ENCODE measurements at regions of chr2 and their contacts with region 1.

Region 1: GRCh38 chr2:11457935-11458334 is 8.0 kb downstream of the E2F6 start:
- DNase-seq: no peak
- ATAC-seq: no peak
- H3K4me3 ChIP-seq: no peak overlapping the region
- H3K27ac ChIP-seq: no peak overlapping the region
- H3K4me1 ChIP-seq: peaks cover 0 to under 1% of the 10 kb centered on the region in 2 donors
- H3K27me3 ChIP-seq: no peaks in the 10 kb centered on the region

Region 2: DNA sequence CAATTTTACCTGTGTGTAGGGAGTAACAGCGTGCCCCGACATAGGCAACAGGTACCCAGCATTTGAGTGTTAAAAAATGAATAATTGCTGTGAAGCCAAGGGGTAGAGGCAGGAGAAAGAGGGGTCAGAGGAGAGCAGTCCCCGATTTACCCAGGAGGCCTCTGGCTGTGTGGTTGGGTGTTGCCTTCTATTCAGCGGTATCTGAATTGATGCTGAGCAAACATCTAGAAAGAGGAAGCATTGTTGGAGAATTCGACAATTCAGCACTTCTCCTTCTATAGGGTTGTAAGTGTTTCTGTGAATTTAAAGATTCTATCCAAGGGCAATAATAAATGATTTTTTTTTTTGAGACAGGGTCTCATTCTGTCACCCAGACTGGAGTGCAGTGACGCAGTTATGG is 636.6 kb before region 1 on chr2:
- intact Hi-C with region 1: loop called in 1 of 2 experiments (anchors 10 kb)
- DNase-seq: no peak
- ATAC-seq: no peak
- H3K4me3 ChIP-seq: no peak overlapping the region
- H3K27ac ChIP-seq: no peak overlapping the region
- H3K4me1 ChIP-seq: no peaks in the 10 kb centered on the region
- H3K27me3 ChIP-seq: no peaks in the 10 kb centered on the region

Region 3: DNA sequence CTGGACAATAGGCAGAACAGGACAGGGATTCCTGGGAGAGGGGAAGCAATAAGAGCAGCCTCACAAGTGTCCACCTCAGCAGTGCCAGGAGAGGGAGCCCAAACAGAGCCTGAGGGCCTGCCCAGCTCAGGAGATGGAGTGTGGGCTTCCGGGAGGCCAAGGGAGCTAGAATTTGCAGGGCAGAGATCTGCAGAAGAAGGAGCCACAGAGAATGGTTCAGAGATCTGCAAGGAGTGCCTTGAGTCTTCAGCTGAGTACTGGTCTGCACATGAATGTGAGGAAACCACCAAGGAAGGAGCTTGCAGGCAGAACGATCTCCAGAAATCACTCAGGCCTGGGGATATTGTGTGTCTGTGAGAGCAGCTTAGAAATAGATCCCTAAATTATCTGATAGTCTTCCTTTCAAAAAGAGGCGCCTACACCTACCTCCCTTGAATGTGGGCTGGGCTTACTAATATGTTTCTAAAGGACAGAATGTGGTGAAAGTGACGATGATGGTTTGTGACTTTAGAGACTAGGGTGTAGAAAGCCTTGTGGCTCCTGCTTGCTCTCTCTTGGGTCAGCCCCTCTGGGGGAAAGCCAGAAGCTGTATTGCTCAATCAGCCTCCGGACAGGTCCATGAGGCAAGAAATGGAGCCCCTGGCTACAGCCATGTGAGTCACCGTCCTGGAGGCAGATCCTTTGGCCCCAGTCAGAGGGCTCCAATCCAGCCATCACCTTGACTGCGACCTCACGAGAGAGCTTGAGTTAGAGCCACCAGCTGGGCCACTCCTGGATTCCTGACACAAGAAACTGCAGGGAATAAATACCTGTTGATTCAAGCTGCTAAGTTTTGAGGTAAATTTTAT is 280.9 kb after region 1 on chr2:
- intact Hi-C with region 1: no loop called
- DNase-seq: peak; percentile 88 to 90
- ATAC-seq: peak; percentile 86
- H3K4me3 ChIP-seq: no peak overlapping the region
- H3K27ac ChIP-seq: no peak overlapping the region
- H3K4me1 ChIP-seq: no peaks in the 10 kb centered on the region
- H3K27me3 ChIP-seq: no peaks in the 10 kb centered on the region